MCF 10A (cell line): ENCODE measurements at regions of chrX and their contacts with region 1.

Region 1: DNA sequence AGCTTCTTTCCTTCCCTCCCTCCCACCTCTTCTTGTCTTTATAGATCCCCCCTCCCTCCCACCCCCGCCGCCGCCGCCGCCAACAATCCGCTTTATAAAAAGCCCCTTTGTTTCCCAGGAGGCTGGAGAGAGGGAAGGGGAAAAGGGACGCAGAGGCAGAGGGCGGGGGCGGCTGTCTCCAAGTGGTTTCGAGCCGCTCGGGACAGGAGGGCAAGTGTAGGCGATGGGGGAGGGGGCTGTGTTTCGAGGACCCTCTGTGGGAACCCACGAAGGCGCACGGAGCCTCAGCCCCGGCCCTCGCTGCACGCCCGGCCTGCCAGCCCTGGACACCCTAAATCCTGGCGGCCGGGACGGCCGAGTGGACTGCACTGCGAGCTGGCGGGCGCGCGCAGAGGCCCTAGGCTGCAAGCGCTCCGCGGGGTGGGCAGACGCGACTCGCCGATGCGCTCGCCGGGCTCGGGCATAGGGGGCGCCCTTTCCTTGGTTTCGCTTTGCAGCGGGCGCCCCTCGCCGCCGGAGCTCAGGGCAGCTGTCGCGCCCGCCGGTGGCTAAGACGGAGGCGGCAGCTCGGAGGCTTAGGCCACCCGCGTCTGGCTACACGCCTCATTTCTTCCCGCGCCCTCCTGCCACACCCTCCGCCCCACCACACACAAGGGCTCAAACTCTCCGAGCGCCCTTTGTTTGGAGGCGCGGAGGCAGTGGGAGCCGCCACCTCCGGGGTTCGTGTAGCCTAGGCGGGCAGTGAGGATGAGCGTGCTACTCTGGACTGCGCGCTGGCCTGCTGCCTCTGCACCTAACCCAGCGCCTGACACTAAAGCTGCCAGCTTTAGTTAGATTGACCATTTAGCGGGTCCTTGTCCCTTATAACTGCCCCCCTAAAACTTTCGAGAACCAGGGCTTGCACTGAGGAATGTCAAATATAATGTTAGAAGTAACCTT is 2.2 kb downstream of the MAMLD1 start:
- DNase-seq: peak; percentile 51
- H3K4me3 Mint-ChIP-seq: peak overlapping the region; percentile 72
- H3K27ac Mint-ChIP-seq: no peak overlapping the region
- H3K4me1 Mint-ChIP-seq: peaks cover 13% of the 10 kb centered on the region
- H3K27me3 Mint-ChIP-seq: peaks cover 7% of the 10 kb centered on the region
- CTCF ChIP-seq: peak; percentile 44

Region 2: DNA sequence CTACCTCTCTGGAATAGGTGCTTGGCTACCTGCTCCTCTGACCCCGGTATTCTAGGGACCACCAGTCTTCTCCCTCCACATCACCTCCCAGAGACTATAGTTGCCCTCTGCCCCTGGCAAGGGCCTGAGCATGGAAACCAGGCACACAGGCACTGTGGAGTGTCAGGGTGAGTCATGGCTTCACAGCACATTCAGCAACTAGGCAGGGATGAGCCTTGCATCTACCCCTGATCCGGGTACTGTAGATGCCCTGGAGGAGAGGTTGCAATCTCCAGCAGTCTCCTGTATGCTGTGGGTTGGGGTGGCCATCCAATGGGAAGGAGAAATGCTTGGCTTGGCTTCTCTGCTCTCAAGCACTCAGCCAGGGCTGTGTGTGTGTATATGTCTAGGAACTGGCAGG is 1332.8 kb before region 1 on chrX:
- CTCF ChIA-PET with region 1: no interaction called
- POLR2A ChIA-PET with region 1: no interaction called
- intact Hi-C with region 1: no loop called
- DNase-seq: peak; percentile 11
- H3K4me3 Mint-ChIP-seq: no peak overlapping the region
- H3K27ac Mint-ChIP-seq: no peak overlapping the region
- H3K4me1 Mint-ChIP-seq: no peaks in the 10 kb centered on the region
- H3K27me3 Mint-ChIP-seq: no peaks in the 10 kb centered on the region
- CTCF ChIP-seq: no peak

Region 3: DNA sequence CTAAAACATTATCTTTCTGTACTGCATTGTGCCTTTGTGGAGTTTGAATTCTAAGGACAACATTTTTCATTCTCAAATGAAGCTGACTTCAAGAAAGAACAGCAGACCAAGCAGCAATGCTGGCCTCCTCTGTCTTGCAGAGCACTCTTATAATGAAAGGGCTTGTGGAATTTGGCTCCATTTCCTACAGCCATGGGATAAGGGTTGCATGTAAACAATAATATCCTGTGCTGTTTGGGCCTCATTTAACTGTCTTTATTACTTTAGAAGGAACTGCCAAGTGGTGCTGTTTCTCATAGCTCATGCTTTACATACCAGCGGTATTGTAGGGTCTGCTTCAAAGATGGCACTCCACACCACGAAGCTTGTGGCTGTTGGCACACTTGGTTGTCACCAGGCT is 315.7 kb before region 1 on chrX:
- CTCF ChIA-PET with region 1: interaction called, 3 read pairs
- POLR2A ChIA-PET with region 1: no interaction called
- intact Hi-C with region 1: loop called (anchors 10 kb)
- DNase-seq: no peak
- H3K4me3 Mint-ChIP-seq: no peak overlapping the region
- H3K27ac Mint-ChIP-seq: no peak overlapping the region
- H3K4me1 Mint-ChIP-seq: peaks cover 5% of the 10 kb centered on the region
- H3K27me3 Mint-ChIP-seq: no peaks in the 10 kb centered on the region
- CTCF ChIP-seq: no peak

Region 4: DNA sequence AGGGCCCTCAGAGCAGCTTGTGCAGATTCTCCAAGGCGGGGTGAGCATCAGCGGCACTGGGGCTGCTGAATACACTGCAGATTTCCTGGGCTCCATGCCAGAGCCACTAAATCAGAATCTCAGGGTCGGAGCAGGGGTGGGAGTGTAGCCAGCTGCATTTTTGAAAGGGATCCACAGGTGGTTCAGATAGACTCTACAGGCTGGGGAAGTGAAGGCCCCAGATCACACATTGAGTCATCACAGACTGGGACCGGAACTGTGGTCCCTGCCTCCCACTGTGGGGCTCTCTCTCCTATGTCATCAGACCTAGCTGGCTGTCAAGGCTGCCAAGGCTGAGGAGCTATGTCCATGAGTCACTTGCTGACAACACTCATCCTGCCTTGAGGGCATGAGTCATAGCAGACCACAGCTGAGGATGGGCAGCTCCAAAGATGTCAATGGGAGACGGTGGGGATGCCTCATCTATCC is 164.5 kb before region 1 on chrX:
- CTCF ChIA-PET with region 1: interaction called, 6 read pairs
- POLR2A ChIA-PET with region 1: interaction called, 10 read pairs
- intact Hi-C with region 1: loop called (anchors 5 kb)
- DNase-seq: peak; percentile 100
- H3K4me3 Mint-ChIP-seq: no peak overlapping the region
- H3K27ac Mint-ChIP-seq: peak overlapping the region; percentile 51
- H3K4me1 Mint-ChIP-seq: peaks cover 55% of the 10 kb centered on the region
- H3K27me3 Mint-ChIP-seq: no peaks in the 10 kb centered on the region
- CTCF ChIP-seq: no peak

Region 5: DNA sequence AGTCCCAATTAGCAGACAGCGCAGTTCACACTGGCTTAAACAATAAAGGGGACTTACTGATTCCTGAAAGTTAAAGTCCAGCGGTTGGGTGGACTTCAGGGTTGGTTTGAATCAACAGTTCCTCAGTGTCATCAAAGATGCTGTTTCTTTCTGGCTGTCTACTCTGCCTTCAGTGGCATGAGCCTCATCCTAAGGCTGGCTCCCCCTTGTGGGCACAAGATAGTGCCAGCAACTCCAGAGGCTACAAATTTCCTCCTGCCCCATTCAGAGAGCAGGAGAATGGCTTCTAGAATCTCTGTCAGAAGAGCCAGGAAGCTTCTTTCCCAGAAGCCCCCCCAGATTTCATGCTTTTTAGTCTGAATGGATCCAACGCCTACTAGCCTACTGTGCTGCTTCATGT is 120.7 kb after region 1 on chrX:
- CTCF ChIA-PET with region 1: interaction called, 9 read pairs
- POLR2A ChIA-PET with region 1: interaction called, 3 read pairs
- intact Hi-C with region 1: loop called (anchors 1 kb)
- DNase-seq: peak; percentile 71
- H3K4me3 Mint-ChIP-seq: no peak overlapping the region
- H3K27ac Mint-ChIP-seq: no peak overlapping the region
- H3K4me1 Mint-ChIP-seq: peaks cover 21% of the 10 kb centered on the region
- H3K27me3 Mint-ChIP-seq: no peaks in the 10 kb centered on the region
- CTCF ChIP-seq: peak; percentile 62

Region 6: DNA sequence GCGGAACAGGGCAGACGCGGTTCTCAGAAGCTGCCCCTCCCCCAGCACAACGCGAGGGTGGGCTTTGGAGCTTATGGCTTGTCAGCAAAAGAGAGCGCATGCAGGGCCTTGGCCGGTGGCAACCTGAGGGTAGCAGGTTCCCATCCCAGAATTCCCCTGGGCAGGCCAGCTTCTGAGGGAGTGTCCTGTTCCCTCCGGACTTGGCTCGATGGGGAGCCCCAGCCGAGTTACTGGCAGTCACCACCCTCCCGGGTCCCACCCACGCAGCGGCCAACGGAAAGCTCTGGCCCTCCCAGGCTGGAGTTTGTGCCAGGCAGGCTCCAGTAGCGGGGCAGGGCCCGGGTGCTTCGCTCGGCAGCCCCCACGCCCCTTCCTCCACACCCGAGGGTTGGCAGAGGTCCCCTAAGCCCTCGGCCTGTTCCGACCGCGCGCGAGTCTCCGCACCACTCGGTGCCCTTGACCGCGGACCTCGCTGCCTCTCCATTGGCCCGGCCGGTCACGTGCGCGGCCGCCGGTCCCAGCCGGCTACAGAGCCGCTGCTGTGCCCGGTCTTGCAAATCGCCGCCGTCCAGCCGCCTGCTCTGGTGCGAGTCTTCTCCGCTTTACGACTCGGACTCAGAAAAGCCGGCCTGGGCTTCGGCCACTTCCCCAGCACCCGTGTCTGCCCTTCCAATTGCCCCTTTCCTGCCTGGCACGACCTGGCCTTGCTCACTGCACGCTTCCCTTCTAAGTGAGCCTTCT is 182.2 kb after region 1 on chrX:
- CTCF ChIA-PET with region 1: no interaction called
- POLR2A ChIA-PET with region 1: no interaction called
- intact Hi-C with region 1: no loop called
- DNase-seq: peak; percentile 38
- H3K4me3 Mint-ChIP-seq: no peak overlapping the region
- H3K27ac Mint-ChIP-seq: no peak overlapping the region
- H3K4me1 Mint-ChIP-seq: peaks cover 11% of the 10 kb centered on the region
- H3K27me3 Mint-ChIP-seq: peaks cover 11% of the 10 kb centered on the region
- CTCF ChIP-seq: no peak

Region 7: DNA sequence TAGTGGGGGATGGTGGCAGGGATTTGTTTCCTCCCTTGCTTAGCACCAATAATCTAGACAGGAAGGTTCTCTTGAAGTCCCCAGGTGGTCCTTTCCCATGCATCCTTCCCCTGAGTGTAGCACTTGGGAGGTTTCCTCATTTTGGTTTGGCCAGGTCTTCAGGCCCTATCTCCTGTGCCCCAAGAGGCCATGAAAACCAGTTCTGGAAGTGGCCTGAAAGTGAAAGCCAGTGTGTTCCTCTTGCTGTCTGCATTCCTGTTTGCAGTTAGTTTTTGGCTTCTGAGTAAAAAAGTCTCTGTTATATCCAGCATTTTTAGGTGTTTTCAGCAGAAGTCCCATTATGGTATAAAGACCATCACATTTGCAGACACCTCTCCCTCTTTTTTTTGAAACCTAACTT is 262.6 kb after region 1 on chrX:
- CTCF ChIA-PET with region 1: no interaction called
- POLR2A ChIA-PET with region 1: no interaction called
- intact Hi-C with region 1: no loop called
- DNase-seq: no peak
- H3K4me3 Mint-ChIP-seq: no peak overlapping the region
- H3K27ac Mint-ChIP-seq: no peak overlapping the region
- H3K4me1 Mint-ChIP-seq: no peaks in the 10 kb centered on the region
- H3K27me3 Mint-ChIP-seq: peaks cover 27% of the 10 kb centered on the region
- CTCF ChIP-seq: no peak

Region 8: DNA sequence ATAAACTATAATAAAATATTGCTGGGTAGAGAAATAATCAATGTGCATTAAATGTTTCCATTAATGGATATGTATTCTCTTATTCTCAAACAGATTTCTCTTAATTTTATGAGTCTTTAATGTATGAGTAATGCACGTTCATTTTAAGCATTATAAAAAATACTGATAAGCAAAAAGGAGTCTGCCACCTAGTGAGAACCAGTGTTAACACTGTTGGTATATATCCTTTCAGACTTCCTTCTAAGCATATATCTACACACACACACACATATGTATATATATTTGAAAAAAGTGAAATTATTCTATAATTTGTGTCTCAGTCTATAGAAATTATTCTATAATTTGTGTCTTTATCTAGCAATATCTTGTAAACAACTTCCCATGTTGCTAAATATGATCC is 278.0 kb after region 1 on chrX:
- CTCF ChIA-PET with region 1: interaction called, 3 read pairs
- POLR2A ChIA-PET with region 1: no interaction called
- intact Hi-C with region 1: loop called (anchors 2 kb)
- DNase-seq: peak; percentile 13
- H3K4me3 Mint-ChIP-seq: no peak overlapping the region
- H3K27ac Mint-ChIP-seq: no peak overlapping the region
- H3K4me1 Mint-ChIP-seq: no peaks in the 10 kb centered on the region
- H3K27me3 Mint-ChIP-seq: no peaks in the 10 kb centered on the region
- CTCF ChIP-seq: peak; percentile 20

Region 9: GRCh38 chrX:150790021-150790420 is 424.7 kb after region 1 on chrX:
- CTCF ChIA-PET with region 1: no interaction called
- POLR2A ChIA-PET with region 1: no interaction called
- intact Hi-C with region 1: no loop called
- DNase-seq: no peak
- H3K4me3 Mint-ChIP-seq: no peak overlapping the region
- H3K27ac Mint-ChIP-seq: no peak overlapping the region
- H3K4me1 Mint-ChIP-seq: no peaks in the 10 kb centered on the region
- H3K27me3 Mint-ChIP-seq: no peaks in the 10 kb centered on the region
- CTCF ChIP-seq: no peak